Endothelial cell of umbilical vein (primary cell): ENCODE measurements at regions of chr14 and their contacts with region 1.

Region 1: GRCh38 chr14:61730756-61731373 is 31.4 kb upstream of the SNAPC1 start:
- DNase-seq: peak; percentile 54
- H3K4me3 ChIP-seq: no peak overlapping the region
- H3K27ac ChIP-seq: no peak overlapping the region
- H3K4me1 ChIP-seq: no peaks in the 10 kb centered on the region
- H3K27me3 ChIP-seq: no peaks in the 10 kb centered on the region
- CTCF ChIP-seq: peak; percentile 2 to 18
- POLR2A ChIP-seq: no peak

Region 2: GRCh38 chr14:61456720-61457119 is 274.1 kb before region 1 on chr14:
- CTCF ChIA-PET with region 1: interaction called, 11 read pairs
- POLR2A ChIA-PET with region 1: no interaction called
- dilution Hi-C with region 1: loop called (anchors 25 kb)
- intact Hi-C with region 1: loop called (anchors 1 kb)
- DNase-seq: peak; percentile 72
- H3K4me3 ChIP-seq: no peak overlapping the region
- H3K27ac ChIP-seq: no peak overlapping the region
- H3K4me1 ChIP-seq: peaks cover 22% of the 10 kb centered on the region
- H3K27me3 ChIP-seq: no peaks in the 10 kb centered on the region
- CTCF ChIP-seq: peak; percentile 75 to 79
- POLR2A ChIP-seq: no peak

Region 3: GRCh38 chr14:61461808-61462275 is 269.0 kb before region 1 on chr14:
- CTCF ChIA-PET with region 1: interaction called, 11 read pairs
- POLR2A ChIA-PET with region 1: no interaction called
- dilution Hi-C with region 1: loop called (anchors 25 kb)
- intact Hi-C with region 1: loop called (anchors 1 kb)
- DNase-seq: peak; percentile 80
- H3K4me3 ChIP-seq: no peak overlapping the region
- H3K27ac ChIP-seq: no peak overlapping the region
- H3K4me1 ChIP-seq: peaks cover 26% of the 10 kb centered on the region
- H3K27me3 ChIP-seq: no peaks in the 10 kb centered on the region
- CTCF ChIP-seq: peak; percentile 35 to 43
- POLR2A ChIP-seq: no peak

Region 4: DNA sequence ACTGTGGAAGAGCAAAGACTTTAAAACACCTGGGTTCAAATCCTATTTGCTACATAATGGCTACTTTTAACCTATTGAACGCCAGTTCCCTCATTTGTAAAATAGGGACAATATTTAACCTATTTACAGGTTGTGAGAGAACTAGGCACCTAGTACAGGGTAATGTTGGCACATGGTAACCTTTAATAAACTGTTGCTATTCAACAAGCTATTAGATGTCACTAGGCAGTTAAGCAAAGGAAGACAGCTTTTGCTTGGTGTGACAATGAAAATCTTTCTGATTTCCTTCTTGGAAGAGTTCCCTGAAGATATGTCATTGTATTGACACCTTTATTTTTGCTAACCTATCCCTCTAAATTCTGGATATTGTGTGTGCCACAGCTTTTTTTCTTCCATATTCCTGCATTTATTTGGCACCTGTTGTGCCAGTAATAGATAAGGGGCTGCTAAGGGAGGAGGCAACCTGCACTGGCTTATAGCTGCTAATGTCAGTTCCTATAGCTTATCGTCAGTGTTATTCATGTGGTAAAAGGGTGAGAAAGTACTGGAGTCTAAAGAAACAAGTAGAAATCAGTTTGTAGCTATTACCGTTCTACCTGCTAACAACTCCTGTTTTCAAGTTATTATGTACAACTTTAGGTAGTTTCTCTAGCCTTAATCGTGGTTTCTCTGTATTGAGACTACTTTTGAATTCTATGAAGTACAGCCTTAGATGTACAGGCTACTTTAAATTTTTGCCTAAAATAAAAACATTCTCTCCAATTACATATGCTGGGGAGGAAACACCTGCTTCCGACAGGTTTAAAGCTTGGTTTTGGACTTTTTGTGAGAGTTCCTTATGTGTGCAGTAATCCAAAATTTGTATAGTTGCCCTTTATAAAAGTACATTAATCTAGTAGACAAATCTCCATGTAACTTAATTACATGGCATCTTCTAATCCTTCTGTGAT is 11.2 kb before region 1 on chr14:
- CTCF ChIA-PET with region 1: interaction called, 17 read pairs
- POLR2A ChIA-PET with region 1: no interaction called
- dilution Hi-C with region 1: no loop called
- intact Hi-C with region 1: no loop called
- DNase-seq: peak; percentile 55
- H3K4me3 ChIP-seq: no peak overlapping the region
- H3K27ac ChIP-seq: peak overlapping the region; percentile 14
- H3K4me1 ChIP-seq: peaks cover 17% of the 10 kb centered on the region
- H3K27me3 ChIP-seq: no peaks in the 10 kb centered on the region
- CTCF ChIP-seq: no peak
- POLR2A ChIP-seq: no peak

Region 5: DNA sequence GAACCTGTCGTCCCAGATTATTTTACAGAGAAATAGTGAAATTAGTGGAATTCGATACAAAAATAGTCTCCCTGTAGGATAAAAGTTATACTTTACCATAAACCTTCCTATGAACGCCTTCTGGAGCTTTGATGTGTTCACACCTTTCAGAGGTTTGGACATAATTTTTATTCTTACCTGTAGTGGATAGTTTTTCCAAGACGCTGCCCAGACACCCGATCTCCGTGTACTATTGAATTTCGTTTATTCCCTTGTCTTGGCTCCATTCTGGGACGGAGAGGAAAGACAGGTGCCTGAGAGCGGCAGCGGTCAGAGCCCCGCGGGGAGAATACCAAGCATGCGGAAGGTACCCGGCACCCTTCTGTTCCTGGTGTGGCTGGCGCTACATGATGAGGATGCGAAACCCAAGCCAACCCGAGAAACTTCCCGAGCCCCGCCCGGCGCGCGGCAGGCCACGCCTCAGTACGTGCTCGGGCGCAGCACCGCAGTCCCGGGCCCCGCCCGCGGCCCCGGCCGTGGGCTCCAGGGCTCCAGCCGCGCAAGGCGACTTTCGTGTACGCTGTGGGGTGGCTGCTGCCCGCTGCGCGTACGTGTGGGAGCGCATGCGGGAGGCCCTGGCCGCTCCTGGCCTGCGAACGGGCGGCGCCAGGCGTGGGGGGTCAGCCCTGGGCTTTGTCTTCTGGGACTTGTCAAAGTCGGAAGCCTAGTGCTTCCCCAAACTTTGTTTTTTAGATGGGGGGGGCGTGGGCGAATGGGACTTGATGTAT is 20.0 kb after region 1 on chr14:
- CTCF ChIA-PET with region 1: interaction called, 13 read pairs
- POLR2A ChIA-PET with region 1: interaction called, 3 read pairs
- dilution Hi-C with region 1: no loop called
- intact Hi-C with region 1: no loop called
- DNase-seq: peak; percentile 82
- H3K4me3 ChIP-seq: peak overlapping the region; percentile 46 to 81 (median 72)
- H3K27ac ChIP-seq: peak overlapping the region; percentile 60
- H3K4me1 ChIP-seq: peaks cover 41% of the 10 kb centered on the region
- H3K27me3 ChIP-seq: no peaks in the 10 kb centered on the region
- CTCF ChIP-seq: no peak
- POLR2A ChIP-seq: peak; percentile 77